ENCODE measurements at regions of chr17 and their contacts with region 1.

Region 1: DNA sequence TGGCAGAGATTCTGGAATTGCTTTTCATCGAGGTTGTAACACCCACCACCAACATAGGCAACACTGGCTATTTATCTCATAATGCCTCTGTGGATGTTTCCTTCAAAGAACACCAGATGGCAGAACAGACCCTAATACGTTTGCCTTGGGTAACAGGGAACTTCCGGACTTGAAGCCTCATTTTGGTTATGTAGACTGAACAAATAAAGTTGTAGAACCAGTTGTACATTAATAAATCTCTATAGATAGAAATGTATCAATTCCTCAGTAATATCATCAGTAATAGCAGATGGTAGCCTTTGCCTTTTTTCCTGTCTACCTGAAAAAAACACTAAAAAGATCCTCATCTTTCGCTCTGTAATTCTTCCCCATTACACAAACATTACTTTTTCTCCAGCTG is 25.9 kb upstream of the APOH start:
- DNase-seq: no peak
- ATAC-seq: peak; percentile 91
- H3K4me3 ChIP-seq: no peak overlapping the region
- H3K27ac ChIP-seq: peak overlapping the region; percentile 37; the same call in 1 of the 2 replicates
- H3K4me1 ChIP-seq: no peaks in the 10 kb centered on the region
- H3K27me3 ChIP-seq: no peaks in the 10 kb centered on the region
- CTCF ChIP-seq: no peak; the same call in 1 of the 2 replicates

Region 2: DNA sequence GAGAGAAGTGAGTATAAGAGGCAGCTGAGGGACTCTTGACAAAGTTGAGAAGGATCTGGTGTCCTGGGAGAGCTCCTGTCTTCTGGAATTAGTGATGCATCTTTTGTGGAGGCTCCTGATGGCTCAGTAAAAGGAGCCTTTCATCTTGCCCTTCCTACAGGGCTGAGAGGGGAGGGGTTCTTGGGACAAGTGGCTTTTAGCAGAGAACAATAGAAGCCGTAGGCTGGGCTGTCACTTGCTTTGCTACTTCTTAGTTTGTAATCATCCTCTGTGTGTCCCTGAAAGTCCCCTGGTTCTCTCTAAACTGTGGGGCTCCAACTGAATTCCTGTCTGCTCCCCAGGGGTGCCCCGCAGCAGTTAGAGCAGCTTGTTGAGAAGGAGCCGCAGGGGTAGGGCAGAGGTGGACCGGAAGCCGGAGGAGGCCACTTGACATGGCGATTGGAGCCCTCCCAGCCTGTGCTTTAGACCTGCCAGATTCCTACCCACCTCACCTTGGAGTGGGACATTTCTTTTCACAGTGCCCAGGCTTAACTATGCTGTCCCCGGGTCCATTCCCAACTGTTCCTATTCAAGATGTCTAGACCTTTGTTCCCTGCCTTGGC is 132.4 kb after region 1 on chr17:
- CTCF ChIA-PET with region 1: no interaction called
- POLR2A ChIA-PET with region 1: interaction called, 11 read pairs
- in situ Hi-C with region 1: no loop called
- intact Hi-C with region 1: no loop called
- DNase-seq: no peak
- ATAC-seq: no peak
- H3K4me3 ChIP-seq: no peak overlapping the region
- H3K27ac ChIP-seq: no peak overlapping the region
- H3K4me1 ChIP-seq: no peaks in the 10 kb centered on the region; the same call in 1 of the 2 replicates
- H3K27me3 ChIP-seq: no peaks in the 10 kb centered on the region
- CTCF ChIP-seq: no peak

Region 3: DNA sequence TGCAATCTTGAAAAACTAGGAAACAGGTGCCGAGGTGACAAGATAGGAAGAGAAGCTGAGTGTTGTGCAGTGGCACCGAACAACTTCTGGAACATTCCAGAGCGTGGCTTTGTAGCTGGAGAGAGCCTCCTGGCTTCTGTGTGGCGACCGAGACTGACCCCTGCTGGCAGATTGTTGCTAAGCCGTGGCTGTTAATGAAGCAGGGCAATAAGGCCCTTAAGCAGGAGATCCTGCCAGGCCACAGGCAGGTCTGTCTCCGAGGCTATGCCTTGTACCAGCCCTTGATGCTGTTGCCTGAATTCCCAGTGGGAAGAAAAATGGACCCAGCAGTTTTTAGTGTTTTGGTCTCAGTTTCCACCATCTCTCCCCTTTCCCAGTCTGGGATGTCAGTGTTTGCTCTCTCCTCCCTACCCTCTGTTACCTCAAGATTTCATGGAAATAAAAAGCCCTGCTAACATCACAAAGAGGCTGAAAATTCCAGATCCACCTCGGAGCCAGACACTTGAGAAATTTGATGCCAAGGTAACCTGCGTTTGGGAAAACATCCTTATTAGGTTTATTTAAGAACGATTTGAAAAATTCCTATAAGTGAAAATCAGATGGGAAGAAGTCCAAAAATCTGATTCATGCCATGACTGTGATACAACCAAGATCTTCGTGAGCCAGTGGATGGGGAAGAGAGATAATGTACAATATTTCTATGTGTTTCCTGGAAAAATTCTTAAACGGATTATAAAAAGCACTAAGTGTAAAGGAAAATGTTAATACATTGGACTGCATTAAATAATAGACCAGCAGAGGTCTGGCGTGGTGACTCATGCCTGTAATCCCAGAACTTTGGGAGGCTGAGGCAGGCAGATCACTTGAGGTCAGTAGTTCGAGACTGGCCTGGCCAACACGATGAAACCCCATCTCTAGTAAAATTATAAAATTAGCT is 312.4 kb after region 1 on chr17:
- CTCF ChIA-PET with region 1: no interaction called
- POLR2A ChIA-PET with region 1: interaction called, 6 read pairs
- in situ Hi-C with region 1: no loop called
- intact Hi-C with region 1: loop called (anchors 5 kb)
- DNase-seq: peak; percentile 62
- ATAC-seq: peak; percentile 86
- H3K4me3 ChIP-seq: no peak overlapping the region
- H3K27ac ChIP-seq: peak overlapping the region; percentile 75
- H3K4me1 ChIP-seq: peaks cover 41% of the 10 kb centered on the region
- H3K27me3 ChIP-seq: no peaks in the 10 kb centered on the region
- CTCF ChIP-seq: peak; percentile 86

Measured in Panc1 (cell line).